Activated naive CD4-positive, alpha-beta T cell treated with anti-CD3 and anti-CD28 coated beads for 36 hours (primary cell): ENCODE measurements at regions of chrX and their contacts with region 1.

Region 1: DNA sequence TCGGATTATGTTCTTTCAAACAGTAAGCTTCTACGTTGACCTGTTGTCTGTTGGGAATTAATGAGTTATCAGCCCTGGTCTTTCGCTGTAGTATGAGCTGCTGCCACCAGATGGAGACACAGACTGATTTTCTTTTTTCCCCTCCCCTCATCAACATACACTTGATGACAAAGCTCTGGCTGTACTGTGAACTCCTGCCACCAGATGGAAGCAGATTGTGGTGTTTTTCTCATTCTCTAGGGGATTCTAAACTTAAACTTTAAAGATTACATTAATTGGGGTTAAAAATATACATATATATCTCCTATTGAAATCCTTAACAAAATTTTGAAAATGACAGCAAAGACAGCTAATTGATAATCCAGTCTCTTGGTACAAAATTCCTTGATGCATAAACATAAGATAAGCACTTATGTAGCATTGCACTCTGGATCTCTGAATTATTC is 44.8 kb downstream of the SMS start:
- DNase-seq: peak; percentile 77
- H3K4me3 Mint-ChIP-seq: no peak overlapping the region
- H3K27ac Mint-ChIP-seq: peak overlapping the region; percentile 8
- H3K4me1 Mint-ChIP-seq: peaks cover 14% of the 10 kb centered on the region
- H3K27me3 Mint-ChIP-seq: no peaks in the 10 kb centered on the region

Region 2: GRCh38 chrX:21412883-21413282 is 572.5 kb before region 1 on chrX:
- CTCF ChIA-PET with region 1: no interaction called
- intact Hi-C with region 1: no loop called
- DNase-seq: no peak
- H3K4me3 Mint-ChIP-seq: no peak overlapping the region
- H3K27ac Mint-ChIP-seq: no peak overlapping the region
- H3K4me1 Mint-ChIP-seq: peaks cover 9% of the 10 kb centered on the region
- H3K27me3 Mint-ChIP-seq: no peaks in the 10 kb centered on the region

Region 3: GRCh38 chrX:21658152-21658737 is 327.1 kb before region 1 on chrX and contains the start of gene KLHL34:
- CTCF ChIA-PET with region 1: no interaction called
- intact Hi-C with region 1: loop called (anchors 10 kb)
- DNase-seq: peak; percentile 26
- H3K4me3 Mint-ChIP-seq: peak within 1 kb of the TSS; percentile 67
- H3K27ac Mint-ChIP-seq: no peak within 1 kb of the TSS
- H3K4me1 Mint-ChIP-seq: peaks cover 11% of the 10 kb centered on the region
- H3K27me3 Mint-ChIP-seq: no peaks in the 10 kb centered on the region
- total RNA-seq, gene KLHL34: 1.1 to 1.2 TPM

Region 4: DNA sequence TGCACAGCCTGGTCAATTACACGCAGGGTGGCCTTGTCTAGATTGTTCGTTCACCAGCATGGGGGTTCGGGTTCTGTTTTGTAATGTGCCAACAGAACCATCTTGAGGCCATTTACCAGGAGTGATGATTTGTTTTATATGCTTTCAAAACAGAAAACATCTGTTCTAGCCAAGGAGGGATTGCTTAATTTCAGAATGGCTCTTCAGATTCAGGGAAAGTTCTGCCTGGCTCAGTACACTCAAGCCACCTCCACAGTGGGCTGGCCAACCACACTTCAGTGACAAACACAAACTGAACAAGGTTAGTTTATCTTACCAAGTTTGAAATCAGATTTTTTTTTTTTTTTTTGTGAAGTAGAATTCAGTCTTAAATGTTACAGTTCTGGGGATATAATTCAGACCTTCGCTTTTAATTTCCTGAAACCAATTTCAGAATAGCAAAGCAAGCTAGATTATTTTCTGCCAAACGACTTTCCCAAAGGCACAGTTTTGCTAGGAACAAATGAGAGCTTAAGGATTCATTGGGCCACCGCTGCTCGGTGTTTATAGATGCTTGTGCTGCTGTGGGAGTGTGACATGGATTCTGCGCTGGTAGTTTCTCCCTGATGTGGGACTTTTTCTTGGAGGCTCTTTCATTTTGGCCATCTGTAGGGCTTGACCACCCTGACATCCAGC is 21.5 kb before region 1 on chrX:
- CTCF ChIA-PET with region 1: no interaction called
- intact Hi-C with region 1: no loop called
- DNase-seq: no peak
- H3K4me3 Mint-ChIP-seq: no peak overlapping the region
- H3K27ac Mint-ChIP-seq: no peak overlapping the region
- H3K4me1 Mint-ChIP-seq: peaks cover 35% of the 10 kb centered on the region
- H3K27me3 Mint-ChIP-seq: no peaks in the 10 kb centered on the region

Region 5: GRCh38 chrX:22135994-22136684 is 150.8 kb after region 1 on chrX:
- CTCF ChIA-PET with region 1: interaction called, 27 read pairs
- intact Hi-C with region 1: loop called (anchors 1 kb)
- DNase-seq: peak; percentile 17
- H3K4me3 Mint-ChIP-seq: no peak overlapping the region
- H3K27ac Mint-ChIP-seq: no peak overlapping the region
- H3K4me1 Mint-ChIP-seq: peaks cover 12% of the 10 kb centered on the region
- H3K27me3 Mint-ChIP-seq: no peaks in the 10 kb centered on the region

Region 6: GRCh38 chrX:22192417-22193060 is 207.2 kb after region 1 on chrX:
- CTCF ChIA-PET with region 1: interaction called, 15 read pairs
- intact Hi-C with region 1: loop called (anchors 1 kb)
- DNase-seq: peak; percentile 71
- H3K4me3 Mint-ChIP-seq: no peak overlapping the region
- H3K27ac Mint-ChIP-seq: no peak overlapping the region
- H3K4me1 Mint-ChIP-seq: peaks cover 3% of the 10 kb centered on the region
- H3K27me3 Mint-ChIP-seq: no peaks in the 10 kb centered on the region

Region 7: GRCh38 chrX:22748093-22748999 is 763.0 kb after region 1 on chrX:
- CTCF ChIA-PET with region 1: interaction called, 3 read pairs
- intact Hi-C with region 1: loop called (anchors 1 kb)
- DNase-seq: peak; percentile 38
- H3K4me3 Mint-ChIP-seq: no peak overlapping the region
- H3K27ac Mint-ChIP-seq: no peak overlapping the region
- H3K4me1 Mint-ChIP-seq: no peaks in the 10 kb centered on the region
- H3K27me3 Mint-ChIP-seq: peaks cover 4% of the 10 kb centered on the region